Gastrocnemius medialis (tissue), 4 donors: ENCODE measurements at regions of chr17 and their contacts with region 1.

Region 1: DNA sequence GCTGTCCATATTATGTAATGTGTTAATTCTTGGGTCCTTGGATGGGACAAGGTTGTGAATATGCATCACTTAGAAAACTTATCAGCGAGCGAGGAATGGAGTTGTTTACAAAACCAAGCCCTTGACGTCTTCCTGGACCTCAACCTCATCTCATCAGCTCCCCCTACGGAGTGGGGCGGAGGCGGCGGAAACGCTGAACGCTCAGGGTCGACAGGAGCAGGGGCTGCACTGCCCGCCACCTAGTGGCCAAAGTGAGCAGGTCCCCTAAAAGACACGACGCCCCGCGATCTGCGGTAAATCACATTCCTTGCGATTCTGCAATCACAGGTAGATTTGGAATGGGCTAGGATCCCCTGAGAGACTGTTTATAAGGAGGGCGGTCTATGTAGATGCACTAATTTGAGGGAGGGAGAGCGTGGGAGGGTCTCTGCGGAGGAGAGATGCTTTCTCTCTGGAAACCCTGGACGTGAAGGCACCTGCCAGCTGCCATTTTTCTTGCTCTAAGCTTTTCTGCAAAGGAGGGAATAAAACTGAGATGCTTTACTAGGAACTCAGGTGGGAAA is 5.4 kb upstream of the ICAM2 start:
- DNase-seq: peak; percentile 46 to 72
- ATAC-seq: peak; percentile 65 to 74
- H3K4me3 ChIP-seq: peak overlapping the region; percentile 0 to 33 (median 18)
- H3K27ac ChIP-seq: peak overlapping the region in 3 of 4 donors; percentile 50 to 82 (median 66)
- H3K4me1 ChIP-seq: peaks cover 9 to 11% of the 10 kb centered on the region in 2 donors
- H3K27me3 ChIP-seq: no peaks in the 10 kb centered on the region
- CTCF ChIP-seq: peak; percentile 84 to 98 (median 95)
- POLR2A ChIP-seq: no peak

Region 2: GRCh38 chr17:63911657-63912426 is 114.0 kb before region 1 on chr17:
- in situ Hi-C with region 1: loop called in 2 of 4 experiments (anchors 5 to 10 kb)
- intact Hi-C with region 1: loop called (anchors 2 kb)
- DNase-seq: no peak
- ATAC-seq: peak; percentile 64 to 68
- H3K4me3 ChIP-seq: no peak overlapping the region
- H3K27ac ChIP-seq: no peak overlapping the region
- H3K4me1 ChIP-seq: no peaks in the 10 kb centered on the region
- H3K27me3 ChIP-seq: no peaks in the 10 kb centered on the region
- CTCF ChIP-seq: peak; percentile 41 to 94 (median 78)
- POLR2A ChIP-seq: no peak

Region 3: DNA sequence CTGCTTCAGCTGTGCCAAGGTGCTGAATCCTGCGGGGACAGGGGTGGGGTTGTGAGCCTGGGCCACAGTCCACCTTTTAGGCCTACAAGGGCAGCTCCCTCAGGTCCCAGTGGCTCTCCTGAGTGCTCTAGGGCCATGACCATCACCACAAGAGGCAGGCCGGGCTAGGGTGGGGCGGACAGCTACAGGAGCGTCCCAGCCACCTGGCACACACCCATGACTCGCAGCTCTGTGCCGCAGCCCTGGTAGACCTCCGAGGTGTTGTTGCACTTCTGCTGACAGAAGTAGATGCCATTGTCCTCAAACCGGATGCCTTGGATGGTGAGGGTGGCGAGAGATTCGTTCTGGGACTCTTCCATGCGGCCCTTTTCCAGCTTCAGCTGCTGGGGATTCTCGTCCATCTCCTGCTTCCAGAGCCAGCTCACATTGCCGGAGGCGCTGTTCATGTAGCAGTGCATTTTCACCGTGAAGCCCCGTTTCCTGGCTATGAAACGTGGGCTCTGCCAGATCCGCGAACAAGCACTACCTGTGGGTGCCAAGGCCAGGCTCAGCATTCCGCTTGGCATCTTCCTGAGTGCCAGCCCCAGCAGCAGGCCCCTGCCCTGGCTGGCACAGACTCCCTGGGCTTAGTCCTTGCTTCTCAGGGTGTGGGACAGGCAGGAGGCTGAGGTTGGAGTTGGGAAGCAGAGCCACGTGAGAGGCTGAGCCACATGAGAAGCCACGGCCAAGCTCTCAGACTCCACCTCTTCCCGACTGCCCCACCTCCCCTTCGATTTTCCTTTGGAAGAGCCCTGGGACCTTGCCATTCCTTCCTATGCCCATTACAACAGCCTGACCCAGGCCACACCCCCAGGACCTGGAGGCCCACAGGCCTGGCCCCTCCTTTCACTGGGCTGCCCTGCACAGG is 95.7 kb before region 1 on chr17:
- in situ Hi-C with region 1: loop called in 1 of 4 experiments (anchors 10 kb)
- intact Hi-C with region 1: no loop called
- DNase-seq: no peak
- ATAC-seq: peak; percentile 35 to 38
- H3K4me3 ChIP-seq: no peak overlapping the region
- H3K27ac ChIP-seq: peak overlapping the region; percentile 45 to 72 (median 66)
- H3K4me1 ChIP-seq: peaks cover 13 to 21% of the 10 kb centered on the region in 2 donors
- H3K27me3 ChIP-seq: no peaks in the 10 kb centered on the region
- CTCF ChIP-seq: no peak
- POLR2A ChIP-seq: no peak

Region 4: GRCh38 chr17:64117981-64118979 is 92.5 kb after region 1 on chr17:
- in situ Hi-C with region 1: no loop called
- intact Hi-C with region 1: no loop called
- DNase-seq: peak in 1 of 2 donors; percentile 33
- ATAC-seq: peak in 1 of 2 donors; percentile 30
- H3K4me3 ChIP-seq: no peak overlapping the region
- H3K27ac ChIP-seq: peak overlapping the region in 3 of 4 donors; percentile 19 to 53 (median 32)
- H3K4me1 ChIP-seq: peaks cover 27 to 31% of the 10 kb centered on the region in 2 donors
- H3K27me3 ChIP-seq: no peaks in the 10 kb centered on the region
- CTCF ChIP-seq: no peak
- POLR2A ChIP-seq: no peak

Region 5: GRCh38 chr17:64129764-64130558 is 104.1 kb after region 1 on chr17 and contains the start of gene ERN1:
- in situ Hi-C with region 1: loop called (anchors 5 to 10 kb)
- intact Hi-C with region 1: loop called (anchors 1 kb)
- DNase-seq: peak; percentile 87 to 93
- ATAC-seq: peak; percentile 85 to 88
- H3K4me3 ChIP-seq: peak within 1 kb of the TSS; percentile 60 to 85 (median 78)
- H3K27ac ChIP-seq: peak within 1 kb of the TSS; percentile 88 to 95 (median 92)
- H3K4me1 ChIP-seq: peaks cover 17 to 21% of the 10 kb centered on the region in 2 donors
- H3K27me3 ChIP-seq: no peaks in the 10 kb centered on the region
- CTCF ChIP-seq: peak in 2 of 5 experiments; percentile 3 to 15
- POLR2A ChIP-seq: peak; percentile 89 to 94
- total RNA-seq, gene ERN1: 9.7 to 27.5 (median 13.8) TPM

Region 6: GRCh38 chr17:64135000-64135399 is 109.2 kb after region 1 on chr17:
- in situ Hi-C with region 1: loop called (anchors 5 to 10 kb)
- intact Hi-C with region 1: loop called (anchors 1 kb)
- DNase-seq: no peak
- ATAC-seq: no peak
- H3K4me3 ChIP-seq: no peak overlapping the region
- H3K27ac ChIP-seq: no peak overlapping the region
- H3K4me1 ChIP-seq: peaks cover 3 to 8% of the 10 kb centered on the region in 2 donors
- H3K27me3 ChIP-seq: no peaks in the 10 kb centered on the region
- CTCF ChIP-seq: no peak
- POLR2A ChIP-seq: no peak

Region 7: DNA sequence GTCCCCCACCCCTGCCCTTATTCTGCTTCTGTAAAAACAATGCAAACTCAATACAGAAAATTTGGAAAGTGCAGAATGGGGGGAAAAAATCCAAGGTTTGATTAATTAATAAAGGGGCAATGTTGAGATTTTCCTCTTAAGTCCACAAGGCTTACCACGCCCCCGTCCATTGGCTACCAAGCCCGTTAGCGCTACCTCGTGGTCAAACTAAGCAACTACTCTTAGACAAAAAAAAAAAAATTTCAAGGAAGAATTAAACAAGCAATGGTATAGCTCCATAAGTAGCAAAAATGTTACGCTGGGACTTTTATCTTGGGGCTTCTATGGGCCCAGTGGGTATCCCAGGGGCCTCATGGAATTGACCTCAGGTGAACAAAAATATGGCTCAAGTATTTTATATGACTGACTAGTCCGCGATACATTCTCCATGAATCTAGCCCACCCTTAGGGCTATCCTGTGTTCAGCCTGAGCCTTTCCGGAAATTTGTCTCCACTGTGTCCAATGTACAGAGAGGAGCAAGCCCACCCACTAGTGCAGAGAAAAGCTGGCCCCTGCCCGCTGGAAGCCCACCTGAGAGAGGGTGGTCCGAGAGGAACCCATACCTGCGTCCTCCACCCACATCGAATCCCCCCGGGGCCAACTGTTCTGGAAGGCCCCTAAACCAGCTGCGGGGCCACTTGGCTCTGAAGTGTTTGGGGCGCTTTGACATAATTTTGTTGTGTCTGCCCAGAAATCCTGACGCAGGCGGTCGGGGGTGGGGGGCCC is 256.3 kb after region 1 on chr17:
- in situ Hi-C with region 1: loop called in 3 of 4 experiments (anchors 10 to 25 kb)
- intact Hi-C with region 1: loop called (anchors 5 kb)
- DNase-seq: peak; percentile 35 to 45
- ATAC-seq: peak; percentile 35 to 41
- H3K4me3 ChIP-seq: peak overlapping the region; percentile 14 to 47 (median 36)
- H3K27ac ChIP-seq: peak overlapping the region; percentile 51 to 71 (median 59)
- H3K4me1 ChIP-seq: peaks cover 23 to 28% of the 10 kb centered on the region in 2 donors
- H3K27me3 ChIP-seq: no peaks in the 10 kb centered on the region
- CTCF ChIP-seq: peak; percentile 72 to 89 (median 85)
- POLR2A ChIP-seq: no peak